ENCODE measurements at regions of chr1 and their contacts with region 1.

Region 1: DNA sequence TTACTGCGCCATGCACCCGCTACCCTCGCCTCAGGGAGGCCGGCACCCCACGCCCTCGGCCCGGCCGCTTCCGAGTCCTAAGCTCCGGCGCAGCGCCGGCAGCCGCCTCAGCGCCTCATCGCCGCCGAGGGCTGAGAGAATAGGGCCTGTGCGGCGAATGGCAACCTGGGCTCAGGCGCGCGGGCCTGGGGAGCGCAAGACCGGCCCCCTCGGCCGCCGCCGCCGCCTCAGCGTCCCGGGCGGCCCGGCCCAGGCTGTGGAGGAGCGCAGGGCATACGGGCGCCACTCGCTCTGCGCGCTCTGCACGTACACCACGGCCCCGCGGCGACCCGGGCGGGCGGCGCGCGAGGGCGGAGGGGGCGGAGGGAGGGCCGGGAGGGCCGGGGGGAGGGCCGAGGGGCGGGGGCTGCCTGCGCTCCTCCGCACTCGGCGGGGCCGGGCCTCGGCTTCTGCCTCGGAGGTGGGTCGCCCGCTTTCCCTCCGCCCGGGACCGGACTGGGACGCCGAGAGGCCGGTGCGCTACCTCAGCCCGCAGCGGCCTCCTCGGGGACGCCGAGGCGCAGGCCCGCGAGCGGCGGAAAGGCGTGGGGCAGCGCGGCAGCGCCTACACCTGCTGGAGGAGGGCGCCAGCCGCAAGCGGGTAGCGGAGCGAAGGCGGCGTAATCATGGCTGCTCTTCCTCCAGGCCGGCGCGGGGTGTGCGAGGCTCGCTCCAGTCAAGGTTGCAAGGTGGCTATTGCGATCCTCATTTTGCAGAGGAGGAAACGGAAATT is at the start of gene EGLN1:
- DNase-seq: peak; percentile 65 to 91 (median 79)
- ATAC-seq: peak; percentile 86
- H3K4me3 ChIP-seq: peak within 1 kb of the TSS; percentile 73 to 80
- H3K4me3 Mint-ChIP-seq: peak within 1 kb of the TSS; percentile 95
- H3K27ac ChIP-seq: peak within 1 kb of the TSS; percentile 40 to 60
- H3K27ac Mint-ChIP-seq: peak within 1 kb of the TSS; percentile 93
- H3K4me1 ChIP-seq: peaks cover 39% of the 10 kb centered on the region
- H3K4me1 Mint-ChIP-seq: peaks cover 48% of the 10 kb centered on the region
- H3K27me3 ChIP-seq: no peaks in the 10 kb centered on the region
- H3K27me3 Mint-ChIP-seq: no peaks in the 10 kb centered on the region
- CTCF ChIP-seq: peak; percentile 40
- total RNA-seq, gene EGLN1: 8.5 to 12.2 TPM

Region 2: GRCh38 chr1:230891413-230891812 is 530.8 kb before region 1 on chr1:
- CTCF ChIA-PET with region 1: no interaction called
- POLR2A ChIA-PET with region 1: no interaction called
- intact Hi-C with region 1: no loop called
- DNase-seq: no peak
- ATAC-seq: no peak
- H3K4me3 ChIP-seq: no peak overlapping the region
- H3K4me3 Mint-ChIP-seq: no peak overlapping the region
- H3K27ac ChIP-seq: no peak overlapping the region
- H3K27ac Mint-ChIP-seq: no peak overlapping the region
- H3K4me1 ChIP-seq: no peaks in the 10 kb centered on the region
- H3K4me1 Mint-ChIP-seq: no peaks in the 10 kb centered on the region
- H3K27me3 ChIP-seq: no peaks in the 10 kb centered on the region
- H3K27me3 Mint-ChIP-seq: peaks cover 18% of the 10 kb centered on the region
- CTCF ChIP-seq: no peak

Region 3: GRCh38 chr1:231040019-231040799 is 382.0 kb before region 1 on chr1 and contains the start of gene FAM89A:
- CTCF ChIA-PET with region 1: no interaction called
- POLR2A ChIA-PET with region 1: no interaction called
- intact Hi-C with region 1: loop called in 1 of 2 experiments (anchors 5 kb)
- DNase-seq: peak; percentile 44 to 86 (median 71)
- ATAC-seq: peak; percentile 72
- H3K4me3 ChIP-seq: peak within 1 kb of the TSS; percentile 81 to 83
- H3K4me3 Mint-ChIP-seq: peak within 1 kb of the TSS; percentile 83
- H3K27ac ChIP-seq: no peak within 1 kb of the TSS
- H3K27ac Mint-ChIP-seq: peak within 1 kb of the TSS; percentile 27
- H3K4me1 ChIP-seq: peaks cover 22% of the 10 kb centered on the region
- H3K4me1 Mint-ChIP-seq: peaks cover 33% of the 10 kb centered on the region
- H3K27me3 ChIP-seq: no peaks in the 10 kb centered on the region
- H3K27me3 Mint-ChIP-seq: no peaks in the 10 kb centered on the region
- CTCF ChIP-seq: no peak
- total RNA-seq, gene FAM89A: 1.4 to 2.1 TPM

Region 4: DNA sequence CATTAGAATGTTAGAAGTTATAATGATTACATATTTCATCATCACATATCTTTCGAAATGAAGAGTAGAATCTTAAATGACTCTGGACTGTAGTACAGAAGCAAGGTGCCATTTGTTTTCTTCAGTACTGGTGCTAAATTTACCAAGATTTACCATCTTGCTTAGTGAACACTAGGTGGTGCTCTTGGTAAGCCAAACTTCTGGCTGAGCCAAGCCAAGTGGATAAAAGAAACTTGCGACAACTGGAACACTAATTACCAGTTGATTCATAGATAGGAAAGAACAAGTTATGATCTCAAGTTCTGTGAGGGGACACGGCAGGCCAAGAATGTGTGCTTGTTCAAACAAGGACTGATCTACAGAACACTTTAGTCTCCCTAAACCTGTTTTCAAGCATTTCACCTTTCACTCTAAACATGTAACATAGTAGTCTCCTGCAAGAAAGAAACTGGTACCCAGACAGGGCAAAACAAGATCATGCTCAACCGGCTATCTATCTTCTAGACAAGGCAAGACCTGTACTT is 64.3 kb before region 1 on chr1:
- CTCF ChIA-PET with region 1: interaction called, 10 read pairs
- POLR2A ChIA-PET with region 1: interaction called, 3 read pairs
- intact Hi-C with region 1: loop called (anchors 1 to 5 kb)
- DNase-seq: peak in 6 of 9 experiments; percentile 27 to 72 (median 45)
- ATAC-seq: peak; percentile 88
- H3K4me3 ChIP-seq: no peak overlapping the region
- H3K4me3 Mint-ChIP-seq: no peak overlapping the region
- H3K27ac ChIP-seq: no peak overlapping the region
- H3K27ac Mint-ChIP-seq: peak overlapping the region; percentile 9
- H3K4me1 ChIP-seq: no peaks in the 10 kb centered on the region
- H3K4me1 Mint-ChIP-seq: peaks cover 6% of the 10 kb centered on the region
- H3K27me3 ChIP-seq: no peaks in the 10 kb centered on the region
- H3K27me3 Mint-ChIP-seq: no peaks in the 10 kb centered on the region
- CTCF ChIP-seq: peak; percentile 71

Region 5: GRCh38 chr1:231369282-231369681 is 52.9 kb before region 1 on chr1:
- CTCF ChIA-PET with region 1: no interaction called
- POLR2A ChIA-PET with region 1: no interaction called
- intact Hi-C with region 1: no loop called
- DNase-seq: no peak
- ATAC-seq: no peak
- H3K4me3 ChIP-seq: no peak overlapping the region
- H3K4me3 Mint-ChIP-seq: no peak overlapping the region
- H3K27ac ChIP-seq: no peak overlapping the region
- H3K27ac Mint-ChIP-seq: no peak overlapping the region
- H3K4me1 ChIP-seq: no peaks in the 10 kb centered on the region
- H3K4me1 Mint-ChIP-seq: no peaks in the 10 kb centered on the region
- H3K27me3 ChIP-seq: no peaks in the 10 kb centered on the region
- H3K27me3 Mint-ChIP-seq: no peaks in the 10 kb centered on the region
- CTCF ChIP-seq: no peak

Region 6: GRCh38 chr1:231410036-231410612 is 12.1 kb before region 1 on chr1:
- CTCF ChIA-PET with region 1: interaction called, 3 read pairs
- POLR2A ChIA-PET with region 1: interaction called, 15 read pairs
- intact Hi-C with region 1: loop called in 1 of 2 experiments (anchors 2 kb)
- DNase-seq: no peak
- ATAC-seq: no peak
- H3K4me3 ChIP-seq: no peak overlapping the region
- H3K4me3 Mint-ChIP-seq: no peak overlapping the region
- H3K27ac ChIP-seq: no peak overlapping the region
- H3K27ac Mint-ChIP-seq: no peak overlapping the region
- H3K4me1 ChIP-seq: peaks cover 41% of the 10 kb centered on the region
- H3K4me1 Mint-ChIP-seq: peaks cover 42% of the 10 kb centered on the region
- H3K27me3 ChIP-seq: no peaks in the 10 kb centered on the region
- H3K27me3 Mint-ChIP-seq: no peaks in the 10 kb centered on the region
- CTCF ChIP-seq: no peak

Region 7: DNA sequence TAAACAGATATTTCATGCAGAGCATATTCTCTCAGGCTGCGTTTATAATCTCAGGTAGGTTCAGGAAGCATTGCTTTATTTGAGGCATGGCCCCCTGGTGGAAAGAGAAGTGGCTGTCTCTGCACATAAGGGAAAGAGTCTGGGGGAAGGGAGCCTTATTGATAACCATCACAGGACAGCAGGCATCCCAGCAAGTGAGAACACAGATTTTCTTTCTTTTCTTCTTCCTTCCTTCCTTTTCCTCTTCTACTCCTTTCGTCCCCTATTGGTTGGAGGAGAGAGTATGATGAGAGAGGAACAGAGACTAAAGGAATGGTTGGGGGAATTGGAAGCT is 128.2 kb after region 1 on chr1:
- CTCF ChIA-PET with region 1: no interaction called
- POLR2A ChIA-PET with region 1: interaction called, 3 read pairs
- intact Hi-C with region 1: loop called in 1 of 2 experiments (anchors 1 kb)
- DNase-seq: peak in 5 of 9 experiments; percentile 15 to 54 (median 38)
- ATAC-seq: peak; percentile 57
- H3K4me3 ChIP-seq: no peak overlapping the region
- H3K4me3 Mint-ChIP-seq: no peak overlapping the region
- H3K27ac ChIP-seq: no peak overlapping the region
- H3K27ac Mint-ChIP-seq: peak overlapping the region; percentile 60
- H3K4me1 ChIP-seq: no peaks in the 10 kb centered on the region
- H3K4me1 Mint-ChIP-seq: peaks cover 31% of the 10 kb centered on the region
- H3K27me3 ChIP-seq: no peaks in the 10 kb centered on the region
- H3K27me3 Mint-ChIP-seq: no peaks in the 10 kb centered on the region
- CTCF ChIP-seq: peak; percentile 45